Activated T-helper 1 cell treated with anti-CD3 and anti-CD28 coated beads, Interleukin-12 subunit alpha, Interleukin-12 subunit beta, Interleukin-2, Interleukin-4 antibody, amounts not matched to agents 30 ng/mL and 10 ng/mL and 1 ng/mL, durations not matched to agents 14 hours and 24 hours and 36 hours (primary cell): ENCODE measurements at regions of chr3 and their contacts with region 1.

Region 1: DNA sequence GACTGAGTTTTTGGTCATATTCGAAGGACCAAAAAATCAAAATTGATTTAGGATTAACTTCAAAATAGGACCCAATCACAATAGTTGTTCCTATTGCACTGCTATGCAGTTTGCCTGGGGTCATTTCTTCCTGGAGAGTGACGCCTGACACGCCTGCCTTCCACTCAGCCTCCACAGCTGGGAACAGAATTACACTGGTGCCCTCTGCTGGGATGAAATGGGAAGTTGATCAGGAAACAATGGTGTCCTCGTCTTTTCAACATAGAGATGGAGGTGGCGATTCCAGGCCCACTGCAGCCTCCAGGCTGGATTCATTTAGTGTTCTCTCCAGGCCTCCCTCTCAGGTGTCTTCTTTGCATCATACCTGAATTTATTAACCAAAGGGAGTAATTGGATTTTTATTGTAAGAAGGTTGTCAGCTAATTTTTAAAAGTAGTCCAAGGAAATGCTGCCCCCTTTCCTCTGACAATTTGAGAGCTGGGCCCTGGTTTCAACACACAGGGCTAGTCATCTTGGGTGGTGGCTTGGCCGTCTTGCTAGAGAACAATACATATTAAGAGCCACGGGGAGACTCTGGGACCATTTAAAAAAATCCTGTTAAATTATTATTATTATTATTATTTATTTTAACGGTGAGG is 69.7 kb downstream of the GAP43 start:
- DNase-seq: peak; percentile 43
- H3K4me3 Mint-ChIP-seq: no peak overlapping the region
- H3K27ac Mint-ChIP-seq: no peak overlapping the region
- H3K4me1 Mint-ChIP-seq: no peaks in the 10 kb centered on the region
- H3K27me3 Mint-ChIP-seq: no peaks in the 10 kb centered on the region

Region 2: GRCh38 chr3:115092220-115092791 is 600.7 kb before region 1 on chr3:
- intact Hi-C with region 1: loop called (anchors 1 kb)
- DNase-seq: peak; percentile 12
- H3K4me3 Mint-ChIP-seq: no peak overlapping the region
- H3K27ac Mint-ChIP-seq: no peak overlapping the region
- H3K4me1 Mint-ChIP-seq: no peaks in the 10 kb centered on the region
- H3K27me3 Mint-ChIP-seq: no peaks in the 10 kb centered on the region

Region 3: GRCh38 chr3:115217678-115218451 is 475.1 kb before region 1 on chr3:
- intact Hi-C with region 1: loop called (anchors 1 kb)
- DNase-seq: no peak
- H3K4me3 Mint-ChIP-seq: no peak overlapping the region
- H3K27ac Mint-ChIP-seq: no peak overlapping the region
- H3K4me1 Mint-ChIP-seq: no peaks in the 10 kb centered on the region
- H3K27me3 Mint-ChIP-seq: peaks cover 3% of the 10 kb centered on the region

Region 4: DNA sequence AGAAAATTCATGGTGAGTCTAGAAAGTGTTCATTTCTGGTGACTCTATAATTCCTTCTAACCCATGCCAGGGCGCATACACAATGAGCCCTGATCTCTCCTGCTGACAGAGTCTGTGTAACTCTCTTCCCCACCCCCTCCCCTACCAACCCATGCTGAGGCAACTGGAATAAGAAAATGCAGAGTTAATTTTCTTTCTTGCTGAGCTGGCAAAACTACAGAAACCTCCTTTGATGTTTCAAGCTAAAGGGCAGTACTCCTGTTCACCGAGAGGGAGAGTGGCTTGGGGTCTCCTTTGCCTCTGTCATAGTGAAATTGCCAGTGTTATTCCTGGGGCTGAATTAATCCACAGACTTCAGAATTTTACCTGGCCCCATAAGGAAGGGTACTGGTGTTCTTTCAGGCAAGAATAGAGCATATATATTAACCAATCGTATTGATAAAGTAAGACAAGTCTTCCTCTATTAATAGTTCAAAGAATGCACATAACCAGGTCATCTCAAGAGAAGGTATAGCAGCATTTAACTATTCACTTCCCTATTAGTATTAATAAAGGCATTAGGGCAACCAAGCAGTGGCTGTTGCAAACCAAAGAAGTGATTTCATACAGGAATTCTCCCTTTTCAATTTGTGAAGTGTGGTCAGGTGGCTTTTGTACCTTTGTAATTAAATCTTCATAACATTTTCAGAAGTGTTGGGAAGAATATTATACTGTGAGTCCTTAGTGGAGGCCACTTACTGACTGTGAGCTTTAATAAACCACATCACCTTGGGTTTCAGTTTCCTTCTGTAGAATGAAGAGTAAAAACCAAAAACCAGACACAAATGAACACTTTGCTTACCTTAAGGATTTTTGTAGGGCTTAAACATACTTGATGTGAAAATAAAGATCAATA is 65.6 kb before region 1 on chr3:
- intact Hi-C with region 1: loop called (anchors 5 kb)
- DNase-seq: no peak
- H3K4me3 Mint-ChIP-seq: no peak overlapping the region
- H3K27ac Mint-ChIP-seq: no peak overlapping the region
- H3K4me1 Mint-ChIP-seq: peaks cover 11% of the 10 kb centered on the region
- H3K27me3 Mint-ChIP-seq: peaks cover 33% of the 10 kb centered on the region

Region 5: DNA sequence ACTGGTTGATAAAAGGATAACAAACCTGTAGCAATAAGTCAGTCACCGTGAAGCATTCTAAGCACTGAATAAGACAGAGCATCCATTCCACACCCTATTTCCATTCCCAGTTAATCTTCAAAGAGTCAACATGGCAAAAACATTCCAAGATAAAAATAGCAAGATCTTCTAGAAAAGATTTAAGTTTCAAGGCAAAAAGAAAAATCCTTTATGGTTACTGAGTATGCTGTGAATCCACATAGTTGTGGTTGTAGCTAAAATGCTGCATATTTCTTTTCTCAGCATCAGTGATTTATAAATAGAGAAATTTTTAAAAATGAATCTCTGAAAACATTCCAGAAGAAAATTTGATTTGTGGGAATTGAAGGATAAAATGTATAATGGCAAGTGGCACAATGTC is 48.6 kb before region 1 on chr3:
- intact Hi-C with region 1: no loop called
- DNase-seq: no peak
- H3K4me3 Mint-ChIP-seq: no peak overlapping the region
- H3K27ac Mint-ChIP-seq: no peak overlapping the region
- H3K4me1 Mint-ChIP-seq: no peaks in the 10 kb centered on the region
- H3K27me3 Mint-ChIP-seq: peaks cover 11% of the 10 kb centered on the region

Region 6: DNA sequence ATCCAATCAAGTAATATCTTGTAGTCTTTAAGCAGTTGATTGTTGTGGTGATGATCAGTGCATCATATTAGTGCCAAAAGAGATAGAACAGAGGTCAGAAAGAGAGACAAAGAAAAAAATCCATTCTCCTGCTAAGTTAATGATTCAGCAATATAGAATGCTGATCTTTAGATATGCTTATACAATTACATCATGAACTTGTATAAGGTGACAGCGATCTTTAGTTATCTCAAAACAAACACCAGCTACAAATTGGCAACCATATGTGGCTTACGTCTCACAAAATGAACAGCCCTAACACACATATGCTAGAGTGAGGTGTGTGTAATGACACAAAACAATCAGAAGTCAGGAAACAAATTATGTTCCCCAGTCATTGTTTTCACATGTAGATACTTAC is 739.8 kb after region 1 on chr3:
- intact Hi-C with region 1: no loop called
- DNase-seq: no peak
- H3K4me3 Mint-ChIP-seq: no peak overlapping the region
- H3K27ac Mint-ChIP-seq: no peak overlapping the region
- H3K4me1 Mint-ChIP-seq: no peaks in the 10 kb centered on the region
- H3K27me3 Mint-ChIP-seq: no peaks in the 10 kb centered on the region